Caco-2 (cell line): ENCODE measurements at regions of chr5 and their contacts with region 1.

Region 1: DNA sequence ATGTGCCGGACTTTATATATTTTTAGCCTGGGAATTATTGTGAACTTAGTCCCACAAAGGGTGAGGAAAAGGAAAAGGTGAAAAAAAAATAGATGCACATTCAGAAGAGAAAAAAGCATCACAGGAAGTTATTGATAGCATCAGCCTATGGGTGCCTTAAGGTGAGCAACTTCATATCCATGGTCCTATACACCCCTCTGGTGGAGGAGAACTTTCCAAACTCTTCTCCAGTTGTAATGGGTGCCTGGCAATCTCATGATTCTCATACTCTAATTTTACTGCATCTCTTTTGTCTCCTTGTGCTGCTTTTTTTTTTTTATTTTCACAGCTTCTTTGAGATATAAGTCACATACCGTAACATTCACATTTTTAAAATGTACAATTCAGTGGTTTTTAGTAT is 107.4 kb downstream of the JAKMIP2 start:
- DNase-seq: peak in 1 of 2 experiments; percentile 65
- H3K4me3 ChIP-seq: no peak overlapping the region
- H3K4me3 Mint-ChIP-seq: no peak overlapping the region
- H3K27ac Mint-ChIP-seq: no peak overlapping the region
- H3K4me1 ChIP-seq: no peaks in the 10 kb centered on the region; the same call in 1 of the 2 replicates
- H3K4me1 Mint-ChIP-seq: no peaks in the 10 kb centered on the region
- H3K27me3 ChIP-seq: no peaks in the 10 kb centered on the region
- H3K27me3 Mint-ChIP-seq: peaks cover 3% of the 10 kb centered on the region
- CTCF ChIP-seq: peak; percentile 66 to 71

Region 2: DNA sequence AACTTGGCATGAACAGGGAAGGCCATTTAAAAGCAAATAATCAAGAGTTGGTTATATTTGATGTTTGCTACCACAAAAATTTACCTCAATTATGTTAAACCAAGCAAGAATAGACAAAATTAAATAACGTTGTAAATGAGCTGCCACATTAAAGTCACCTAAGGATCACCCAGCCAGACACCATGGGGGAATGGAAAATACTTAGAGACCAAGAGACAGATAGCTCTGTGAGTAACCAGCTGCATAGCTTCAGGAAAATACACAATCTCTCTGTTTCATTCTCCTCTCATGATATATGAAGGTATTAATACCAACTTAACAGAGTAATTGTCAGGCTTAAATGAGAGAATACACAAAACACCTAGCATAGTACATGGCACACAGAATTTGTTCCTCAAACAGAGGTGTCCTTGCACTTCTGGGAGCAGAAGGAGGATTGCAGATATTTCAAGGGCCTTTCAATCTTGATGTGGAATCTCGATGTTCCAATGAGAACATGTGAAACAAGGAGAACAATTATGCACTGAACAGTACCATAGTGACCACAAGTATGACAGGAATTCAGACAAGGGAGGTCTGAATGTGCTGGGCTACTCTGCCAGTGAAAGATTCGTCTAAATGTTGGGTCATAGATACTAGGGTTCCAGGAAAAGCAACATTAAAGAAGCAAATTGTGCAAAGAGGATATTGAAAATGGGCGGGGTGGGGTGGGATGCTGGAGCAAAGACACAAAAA is 88.8 kb after region 1 on chr5:
- CTCF ChIA-PET with region 1: no interaction called
- POLR2A ChIA-PET with region 1: no interaction called
- intact Hi-C with region 1: no loop called
- DNase-seq: no peak
- H3K4me3 ChIP-seq: no peak overlapping the region
- H3K4me3 Mint-ChIP-seq: no peak overlapping the region
- H3K27ac Mint-ChIP-seq: no peak overlapping the region
- H3K4me1 ChIP-seq: no peaks in the 10 kb centered on the region
- H3K4me1 Mint-ChIP-seq: no peaks in the 10 kb centered on the region
- H3K27me3 ChIP-seq: no peaks in the 10 kb centered on the region
- H3K27me3 Mint-ChIP-seq: peaks cover under 1% of the 10 kb centered on the region
- CTCF ChIP-seq: no peak

Region 3: GRCh38 chr5:147822686-147823491 is 147.7 kb after region 1 on chr5:
- CTCF ChIA-PET with region 1: no interaction called
- POLR2A ChIA-PET with region 1: no interaction called
- intact Hi-C with region 1: loop called (anchors 1 kb)
- DNase-seq: peak in 1 of 2 experiments; percentile 44
- H3K4me3 ChIP-seq: no peak overlapping the region
- H3K4me3 Mint-ChIP-seq: no peak overlapping the region
- H3K27ac Mint-ChIP-seq: no peak overlapping the region
- H3K4me1 ChIP-seq: peaks cover 16% of the 10 kb centered on the region; the same call in 1 of the 2 replicates
- H3K4me1 Mint-ChIP-seq: peaks cover 18% of the 10 kb centered on the region
- H3K27me3 ChIP-seq: no peaks in the 10 kb centered on the region
- H3K27me3 Mint-ChIP-seq: no peaks in the 10 kb centered on the region
- CTCF ChIP-seq: peak; percentile 54 to 61